ENCODE measurements at regions of chr18 and their contacts with region 1.

Region 1: GRCh38 chr18:34787931-34788532 is 77.9 kb downstream of the DTNA start:
- DNase-seq: peak; percentile 20 to 32
- ATAC-seq: peak; percentile 75 to 87
- H3K4me3 ChIP-seq: no peak overlapping the region
- H3K27ac ChIP-seq: no peak overlapping the region
- H3K4me1 ChIP-seq: no peaks in the 10 kb centered on the region
- H3K27me3 ChIP-seq: no peaks in the 10 kb centered on the region
- CTCF ChIP-seq: peak; percentile 75 to 84 (median 79)
- POLR2A ChIP-seq: no peak

Region 2: GRCh38 chr18:34122724-34123334 is 665.2 kb before region 1 on chr18:
- in situ Hi-C with region 1: loop called (anchors 10 to 25 kb)
- intact Hi-C with region 1: loop called (anchors 2 kb)
- DNase-seq: peak in 1 of 2 donors; percentile 12
- ATAC-seq: peak; percentile 42 to 69
- H3K4me3 ChIP-seq: no peak overlapping the region
- H3K27ac ChIP-seq: no peak overlapping the region
- H3K4me1 ChIP-seq: no peaks in the 10 kb centered on the region
- H3K27me3 ChIP-seq: no peaks in the 10 kb centered on the region
- CTCF ChIP-seq: peak; percentile 47 to 78 (median 71)
- POLR2A ChIP-seq: no peak

Region 3: GRCh38 chr18:34493099-34493544 is 294.9 kb before region 1 on chr18:
- in situ Hi-C with region 1: loop called in 1 of 4 experiments (anchors 25 kb)
- intact Hi-C with region 1: loop called (anchors 5 kb)
- DNase-seq: peak; percentile 63 to 85
- ATAC-seq: peak; percentile 87 to 88
- H3K4me3 ChIP-seq: peak overlapping the region; percentile 69 to 79 (median 72)
- H3K27ac ChIP-seq: peak overlapping the region; percentile 82 to 94 (median 92)
- H3K4me1 ChIP-seq: peaks cover 19 to 20% of the 10 kb centered on the region in 2 donors
- H3K27me3 ChIP-seq: no peaks in the 10 kb centered on the region
- CTCF ChIP-seq: no peak
- POLR2A ChIP-seq: no peak

Region 4: DNA sequence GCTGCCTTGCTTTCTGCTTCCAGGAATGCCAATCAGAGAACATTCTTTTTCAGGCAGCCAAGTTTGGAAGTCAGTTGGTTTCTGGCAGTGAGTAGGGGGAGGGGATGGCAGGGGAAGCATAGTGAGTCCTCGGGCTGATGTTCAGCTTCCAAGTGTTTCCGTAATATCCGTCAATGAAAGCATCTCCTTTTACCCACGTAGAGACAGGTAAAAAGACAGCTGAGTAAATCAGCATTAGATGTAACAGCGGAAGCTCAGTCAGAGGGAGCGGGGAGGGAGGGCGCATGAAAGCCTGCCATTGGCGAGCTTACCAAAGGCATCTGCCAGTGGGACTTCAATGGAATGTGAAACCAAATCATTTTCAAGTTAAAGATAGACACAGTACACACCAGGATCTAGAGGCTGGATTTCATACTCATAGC is 195.1 kb before region 1 on chr18:
- in situ Hi-C with region 1: loop called in 2 of 4 experiments (anchors 5 to 10 kb)
- intact Hi-C with region 1: loop called (anchors 2 kb)
- DNase-seq: peak; percentile 74 to 88
- ATAC-seq: peak; percentile 87 to 90
- H3K4me3 ChIP-seq: peak overlapping the region; percentile 47 to 50 (median 48)
- H3K27ac ChIP-seq: peak overlapping the region; percentile 81 to 87 (median 86)
- H3K4me1 ChIP-seq: peaks cover 36 to 44% of the 10 kb centered on the region in 2 donors
- H3K27me3 ChIP-seq: no peaks in the 10 kb centered on the region
- CTCF ChIP-seq: no peak
- POLR2A ChIP-seq: peak; percentile 38 to 60

Region 5: GRCh38 chr18:34729264-34729663 is 58.8 kb before region 1 on chr18:
- in situ Hi-C with region 1: no loop called
- intact Hi-C with region 1: loop called (anchors 5 kb)
- DNase-seq: no peak
- ATAC-seq: peak; percentile 89 to 93
- H3K4me3 ChIP-seq: no peak overlapping the region
- H3K27ac ChIP-seq: peak overlapping the region; percentile 24 to 76 (median 64)
- H3K4me1 ChIP-seq: peaks cover 22 to 35% of the 10 kb centered on the region in 2 donors
- H3K27me3 ChIP-seq: no peaks in the 10 kb centered on the region
- CTCF ChIP-seq: peak in 4 of 5 experiments; percentile 42 to 57 (median 48)
- POLR2A ChIP-seq: no peak

Region 6: GRCh38 chr18:34809451-34810072 is 21.5 kb after region 1 on chr18:
- in situ Hi-C with region 1: no loop called
- intact Hi-C with region 1: no loop called
- DNase-seq: peak in 1 of 2 donors; percentile 40
- ATAC-seq: peak; percentile 49 to 61
- H3K4me3 ChIP-seq: no peak overlapping the region
- H3K27ac ChIP-seq: peak overlapping the region in 2 of 4 donors; percentile 25 to 32
- H3K4me1 ChIP-seq: peaks cover 23 to 35% of the 10 kb centered on the region in 2 donors
- H3K27me3 ChIP-seq: no peaks in the 10 kb centered on the region
- CTCF ChIP-seq: peak in 3 of 5 experiments; percentile 20 to 40 (median 35)
- POLR2A ChIP-seq: no peak